Transverse colon (tissue), 4 donors: ENCODE measurements at regions of chr12 and their contacts with region 1.

Region 1: GRCh38 chr12:27305673-27306456 is 26.8 kb upstream of the BMAL2 start:
- DNase-seq: no peak
- H3K4me3 ChIP-seq: no peak overlapping the region
- H3K27ac ChIP-seq: peak overlapping the region; percentile 30 to 49 (median 42)
- H3K4me1 ChIP-seq: peaks cover 0 to 22% (median 3%) of the 10 kb centered on the region in 4 donors
- H3K27me3 ChIP-seq: no peaks in the 10 kb centered on the region
- CTCF ChIP-seq: peak; percentile 50 to 69 (median 52)
- EP300 ChIP-seq: no peak
- POLR2A ChIP-seq: no peak

Region 2: DNA sequence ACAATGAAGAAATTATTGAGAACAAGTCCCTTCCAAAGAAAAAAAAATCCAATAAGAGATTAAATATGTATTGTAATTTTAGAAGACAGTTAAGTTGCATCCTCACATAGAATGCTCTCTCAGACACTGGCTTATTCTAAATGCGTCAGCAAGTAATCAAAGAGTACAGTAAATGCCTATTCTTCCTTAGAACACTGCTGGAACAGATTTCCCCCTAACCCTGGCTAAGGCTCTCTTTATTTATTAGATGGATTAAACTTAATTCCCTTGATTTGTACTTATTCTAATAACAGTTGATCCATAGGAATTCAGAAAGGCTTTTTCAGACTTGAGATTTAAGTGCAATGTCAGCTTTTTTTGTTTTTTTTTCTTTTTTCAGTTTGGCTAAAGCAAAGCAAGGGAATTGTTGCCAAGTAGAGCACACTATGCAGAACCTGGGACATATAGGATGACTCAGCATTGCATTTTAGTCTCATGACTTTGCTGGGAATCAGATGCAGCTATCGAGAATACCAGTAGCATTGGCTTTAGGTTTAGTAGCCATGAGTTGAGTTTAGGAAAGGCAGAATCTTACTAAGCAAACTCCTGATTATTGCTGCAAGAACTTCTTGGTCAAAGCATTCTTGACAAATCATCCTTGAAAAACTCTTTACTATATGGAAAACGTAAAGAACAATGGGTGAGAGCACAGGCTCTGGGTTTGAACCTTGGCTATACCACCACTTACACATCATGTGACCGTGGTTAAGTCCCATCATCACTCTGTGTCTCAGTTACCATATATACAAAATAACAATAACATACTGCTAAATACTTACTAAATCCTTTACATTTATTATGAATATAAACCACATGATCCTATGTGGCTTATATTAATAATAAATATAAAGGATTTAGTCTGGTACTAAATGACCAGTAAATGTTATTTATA is 256.8 kb before region 1 on chr12:
- in situ Hi-C with region 1: loop called in 2 of 4 experiments (anchors 25 kb)
- intact Hi-C with region 1: no loop called
- DNase-seq: no peak
- H3K4me3 ChIP-seq: no peak overlapping the region
- H3K27ac ChIP-seq: no peak overlapping the region
- H3K4me1 ChIP-seq: no peaks in the 10 kb centered on the region
- H3K27me3 ChIP-seq: no peaks in the 10 kb centered on the region
- CTCF ChIP-seq: no peak
- EP300 ChIP-seq: no peak
- POLR2A ChIP-seq: no peak

Region 3: DNA sequence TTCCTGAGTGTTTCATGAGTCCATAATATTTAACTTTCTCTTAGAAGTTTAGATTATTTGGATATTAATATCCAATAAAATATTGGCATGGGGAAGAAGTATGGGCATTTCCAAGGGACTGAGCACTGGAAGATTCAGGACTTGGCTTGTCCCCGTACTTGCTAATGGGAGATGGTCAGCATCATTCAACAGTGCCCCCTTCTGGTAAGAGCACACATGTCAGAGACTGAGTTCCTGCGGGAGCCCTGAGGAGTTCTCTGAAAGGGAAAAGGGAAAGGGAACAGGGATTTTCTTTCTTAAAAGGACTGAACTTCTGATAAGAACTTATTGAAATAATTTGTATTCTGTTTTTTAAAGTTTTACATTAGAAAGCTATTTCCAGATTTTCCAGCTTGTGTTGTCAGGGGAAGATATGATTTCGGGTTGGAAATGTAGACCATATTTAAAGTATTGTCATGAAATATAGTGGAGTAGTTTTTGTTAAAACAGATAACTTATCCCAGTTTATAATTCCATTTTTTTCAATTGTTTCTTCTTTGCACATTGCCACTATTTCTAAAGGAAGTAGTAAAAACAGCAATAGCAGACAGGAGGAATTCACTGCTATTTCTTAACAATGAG is 163.7 kb before region 1 on chr12:
- in situ Hi-C with region 1: loop called in 2 of 4 experiments (anchors 25 kb)
- intact Hi-C with region 1: no loop called
- DNase-seq: peak; percentile 57
- H3K4me3 ChIP-seq: no peak overlapping the region
- H3K27ac ChIP-seq: no peak overlapping the region
- H3K4me1 ChIP-seq: peaks cover 0 to 14% (median 0%) of the 10 kb centered on the region in 4 donors
- H3K27me3 ChIP-seq: no peaks in the 10 kb centered on the region
- CTCF ChIP-seq: peak; percentile 59 to 81 (median 73)
- EP300 ChIP-seq: no peak
- POLR2A ChIP-seq: no peak